Heart left ventricle (tissue), 16 donors: ENCODE measurements at regions of chr7 and their contacts with region 1.

Region 1: GRCh38 chr7:76278540-76278939 is 23.9 kb upstream of the HSPB1 start:
- DNase-seq: no peak
- ATAC-seq: no peak
- H3K4me3 ChIP-seq: no peak overlapping the region
- H3K27ac ChIP-seq: no peak overlapping the region
- H3K4me1 ChIP-seq: peaks cover 0 to 22% (median 0%) of the 10 kb centered on the region in 12 donors
- H3K27me3 ChIP-seq: peaks cover 3 to 37% (median 16%) of the 10 kb centered on the region in 9 donors
- CTCF ChIP-seq: no peak
- POLR2A ChIP-seq: no peak

Region 2: DNA sequence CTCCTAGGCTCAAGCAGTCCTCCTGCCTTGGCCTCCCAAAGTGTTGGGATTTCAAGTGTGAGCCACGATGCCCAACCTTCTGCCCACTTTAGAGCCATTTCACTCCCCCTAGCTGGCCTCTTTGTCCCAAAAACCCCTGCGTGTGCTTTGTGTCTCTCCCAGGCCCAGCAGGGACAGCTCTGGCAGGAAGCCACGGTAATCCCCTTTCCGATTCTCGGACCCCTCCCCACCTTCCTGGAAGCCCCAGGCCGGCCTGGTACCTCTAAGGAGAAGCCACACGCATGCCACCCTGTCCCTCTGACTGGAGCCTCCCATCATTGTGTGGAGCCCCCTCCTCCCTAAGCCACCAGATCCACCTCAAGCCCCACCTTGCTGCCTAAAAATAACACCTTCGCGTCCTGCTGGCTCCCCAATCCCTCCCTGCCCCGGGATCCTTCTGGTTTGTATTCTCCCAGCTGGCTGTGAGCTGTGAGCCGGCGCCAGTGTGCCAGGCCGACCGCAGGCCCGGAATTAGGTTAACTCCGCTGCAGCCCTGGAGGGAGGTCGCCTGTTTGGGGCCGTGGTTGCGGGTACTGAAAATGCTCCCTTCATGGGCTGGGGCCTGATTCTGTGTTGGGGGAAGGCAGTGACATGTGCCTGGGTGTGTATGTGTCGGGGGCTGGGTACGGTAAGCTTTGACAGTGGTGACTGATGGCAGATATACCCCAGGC is 93.2 kb before region 1 on chr7:
- intact Hi-C with region 1: loop called in 1 of 10 experiments (anchors 10 kb)
- DNase-seq: no peak
- ATAC-seq: peak in 2 of 4 donors; percentile 13 to 27
- H3K4me3 ChIP-seq: no peak overlapping the region
- H3K27ac ChIP-seq: no peak overlapping the region
- H3K4me1 ChIP-seq: no peaks in the 10 kb centered on the region
- H3K27me3 ChIP-seq: no peaks in the 10 kb centered on the region
- CTCF ChIP-seq: no peak
- POLR2A ChIP-seq: no peak

Region 3: DNA sequence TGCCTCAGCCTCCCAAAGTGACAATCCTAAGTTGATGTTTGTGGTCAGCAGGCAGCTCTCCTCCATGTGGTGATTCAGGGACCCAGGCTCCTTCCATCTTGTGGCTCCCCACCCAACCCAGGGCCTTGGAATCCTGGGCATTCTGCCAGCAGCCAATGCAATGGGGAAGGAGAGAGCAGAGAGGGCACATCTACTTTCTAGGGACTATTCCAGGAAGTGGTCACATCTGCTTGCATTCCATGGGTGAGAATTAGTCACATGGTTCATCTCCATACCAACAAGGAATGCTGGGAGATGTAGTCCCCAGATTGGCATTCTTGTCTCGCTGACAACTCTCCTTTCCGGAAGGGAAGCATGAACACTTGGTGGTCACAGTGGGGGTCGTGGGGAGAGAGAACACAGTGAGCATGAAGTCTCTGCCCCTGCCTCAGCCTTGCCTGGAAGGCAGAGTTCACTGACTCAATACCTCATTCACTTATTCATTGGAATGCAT is 86.7 kb before region 1 on chr7:
- intact Hi-C with region 1: loop called in 2 of 10 experiments (anchors 5 to 10 kb)
- DNase-seq: no peak
- ATAC-seq: no peak
- H3K4me3 ChIP-seq: no peak overlapping the region
- H3K27ac ChIP-seq: no peak overlapping the region
- H3K4me1 ChIP-seq: no peaks in the 10 kb centered on the region
- H3K27me3 ChIP-seq: peaks cover 0 to 10% (median 0%) of the 10 kb centered on the region in 9 donors
- CTCF ChIP-seq: no peak
- POLR2A ChIP-seq: no peak

Region 4: GRCh38 chr7:76428868-76429760 is 150.6 kb after region 1 on chr7:
- intact Hi-C with region 1: no loop called
- DNase-seq: peak in 1 of 5 donors; percentile 17
- ATAC-seq: peak in 2 of 4 donors; percentile 26 to 38
- H3K4me3 ChIP-seq: no peak overlapping the region
- H3K27ac ChIP-seq: no peak overlapping the region
- H3K4me1 ChIP-seq: peaks cover 0 to 8% (median 0%) of the 10 kb centered on the region in 12 donors
- H3K27me3 ChIP-seq: no peaks in the 10 kb centered on the region
- CTCF ChIP-seq: no peak
- POLR2A ChIP-seq: no peak